Activated T-helper 2 cell treated with anti-CD3 and anti-CD28 coated beads, Interferon-gamma antibody, Interleukin-2, Interleukin-4, amounts not matched to agents 10 μg/mL and 5 μg/mL and 100 μg/mL, durations not matched to agents 14 hours and 24 hours and 36 hours (primary cell): ENCODE measurements at regions of chr6 and their contacts with region 1.

Region 1: GRCh38 chr6:136510782-136511181 is 39.4 kb downstream of the MAP7 start:
- DNase-seq: no peak
- H3K4me3 Mint-ChIP-seq: no peak overlapping the region
- H3K27ac Mint-ChIP-seq: peak overlapping the region; percentile 0
- H3K4me1 Mint-ChIP-seq: peaks cover 17% of the 10 kb centered on the region
- H3K27me3 Mint-ChIP-seq: no peaks in the 10 kb centered on the region

Region 2: DNA sequence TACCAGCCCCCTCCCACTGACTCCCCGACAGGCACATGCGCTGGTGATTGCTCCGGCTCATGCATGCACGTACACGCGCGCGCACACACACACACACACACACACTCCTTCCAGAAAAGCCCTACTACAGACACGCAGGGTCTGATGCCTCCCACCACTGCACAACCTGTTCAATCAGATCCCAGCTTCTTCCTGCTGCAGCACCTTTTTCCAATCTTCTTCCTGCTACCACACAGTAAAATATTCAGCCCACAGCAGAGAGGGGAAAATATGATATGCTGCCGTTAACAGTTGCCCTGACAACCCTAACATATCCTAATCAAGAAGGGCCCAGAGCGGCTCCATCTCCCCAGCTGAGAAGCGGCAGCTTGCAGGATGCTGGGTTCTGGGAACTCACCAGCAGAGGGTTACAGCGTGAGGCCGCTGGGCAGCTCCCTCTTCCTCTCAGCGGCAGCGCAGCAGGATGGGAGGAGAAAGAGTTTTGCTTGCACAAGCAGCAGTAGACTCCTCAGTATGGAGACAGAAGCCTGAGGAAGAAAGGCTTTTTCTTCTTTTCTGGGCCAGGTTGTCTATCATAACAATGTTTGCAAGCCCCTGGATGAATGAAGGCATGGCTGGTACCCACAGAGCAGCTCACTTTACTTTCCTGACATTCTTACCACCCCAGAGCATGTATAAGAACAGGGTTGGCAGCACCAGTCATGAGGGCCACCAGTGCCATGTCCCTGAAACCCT is 15.6 kb after region 1 on chr6:
- intact Hi-C with region 1: loop called (anchors 2 kb)
- DNase-seq: peak; percentile 24
- H3K4me3 Mint-ChIP-seq: peak overlapping the region; percentile 37
- H3K27ac Mint-ChIP-seq: no peak overlapping the region
- H3K4me1 Mint-ChIP-seq: peaks cover 14% of the 10 kb centered on the region
- H3K27me3 Mint-ChIP-seq: peaks cover 12% of the 10 kb centered on the region

Region 3: GRCh38 chr6:137087902-137088301 is 577.1 kb after region 1 on chr6:
- intact Hi-C with region 1: no loop called
- DNase-seq: no peak
- H3K4me3 Mint-ChIP-seq: no peak overlapping the region
- H3K27ac Mint-ChIP-seq: no peak overlapping the region
- H3K4me1 Mint-ChIP-seq: peaks cover 9% of the 10 kb centered on the region
- H3K27me3 Mint-ChIP-seq: peaks cover 12% of the 10 kb centered on the region